CD8-positive, alpha-beta T cell (primary cell): ENCODE measurements at regions of chr6 and their contacts with region 1.

Region 1: GRCh38 chr6:31246050-31246521 is 25.8 kb downstream of the HLA-C start:
- DNase-seq: no peak
- ATAC-seq: no peak
- H3K4me3 ChIP-seq: no peak overlapping the region
- H3K4me3 Mint-ChIP-seq: no peak overlapping the region
- H3K27ac ChIP-seq: no peak overlapping the region
- H3K27ac Mint-ChIP-seq: no peak overlapping the region
- H3K4me1 ChIP-seq: no peaks in the 10 kb centered on the region
- H3K4me1 Mint-ChIP-seq: peaks cover 17% of the 10 kb centered on the region
- H3K27me3 ChIP-seq: no peaks in the 10 kb centered on the region
- H3K27me3 Mint-ChIP-seq: no peaks in the 10 kb centered on the region
- CTCF ChIP-seq: no peak

Region 2: GRCh38 chr6:31203345-31203979 is 42.6 kb before region 1 on chr6:
- CTCF ChIA-PET with region 1: interaction called, 4 read pairs
- POLR2A ChIA-PET with region 1: interaction called, 3 read pairs
- intact Hi-C with region 1: loop called (anchors 5 kb)
- DNase-seq: peak in 7 of 9 experiments; percentile 29 to 90 (median 63)
- ATAC-seq: peak; percentile 60
- H3K4me3 ChIP-seq: peak overlapping the region; percentile 65 to 95
- H3K4me3 Mint-ChIP-seq: peak overlapping the region; percentile 93
- H3K27ac ChIP-seq: peak overlapping the region; percentile 84 to 95
- H3K27ac Mint-ChIP-seq: peak overlapping the region; percentile 98
- H3K4me1 ChIP-seq: peaks cover 46% of the 10 kb centered on the region
- H3K4me1 Mint-ChIP-seq: peaks cover 60% of the 10 kb centered on the region
- H3K27me3 ChIP-seq: no peaks in the 10 kb centered on the region
- H3K27me3 Mint-ChIP-seq: no peaks in the 10 kb centered on the region
- CTCF ChIP-seq: no peak